ENCODE measurements at regions of chr2 and their contacts with region 1.

Region 1: DNA sequence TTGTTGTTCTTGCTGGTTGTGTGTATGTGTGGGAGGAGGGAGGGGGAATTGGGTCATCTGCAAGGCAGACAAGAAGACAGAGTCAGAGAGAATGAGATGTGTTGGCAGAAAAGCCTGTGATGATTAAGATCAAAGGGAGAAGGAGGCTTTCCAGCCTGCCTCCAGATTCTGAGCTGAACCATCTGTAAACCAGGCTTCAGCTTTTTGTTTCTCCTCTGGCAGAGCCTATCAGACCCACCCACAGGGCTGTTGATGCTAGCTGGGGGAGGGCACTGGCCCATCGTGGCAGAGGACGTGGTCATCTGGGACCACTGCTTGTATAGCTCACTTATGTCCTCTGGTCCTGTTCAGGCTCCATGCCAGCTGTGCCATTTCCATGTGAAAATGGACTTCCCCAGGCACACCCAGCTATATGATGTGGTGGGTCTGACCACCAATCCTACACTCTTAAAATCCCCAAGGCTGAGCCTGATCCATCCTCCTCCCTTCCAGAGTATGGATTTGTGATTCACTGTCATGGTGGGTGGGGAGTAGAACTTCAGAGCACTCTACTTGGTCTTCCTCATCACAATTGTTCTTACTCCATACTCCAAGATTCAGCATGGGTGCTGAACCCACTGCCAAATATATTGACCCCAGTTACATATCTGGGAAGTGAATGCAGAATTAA is 27.8 kb upstream of the COL6A3 start:
- DNase-seq: no peak
- H3K4me3 Mint-ChIP-seq: peak overlapping the region; percentile 9
- H3K27ac Mint-ChIP-seq: peak overlapping the region; percentile 90
- H3K4me1 Mint-ChIP-seq: peaks cover 51% of the 10 kb centered on the region
- H3K27me3 Mint-ChIP-seq: no peaks in the 10 kb centered on the region

Region 2: GRCh38 chr2:237427769-237428506 is 13.8 kb before region 1 on chr2:
- intact Hi-C with region 1: loop called (anchors 1 kb)
- DNase-seq: peak; percentile 31
- H3K4me3 Mint-ChIP-seq: peak overlapping the region; percentile 55
- H3K27ac Mint-ChIP-seq: peak overlapping the region; percentile 84
- H3K4me1 Mint-ChIP-seq: peaks cover 69% of the 10 kb centered on the region
- H3K27me3 Mint-ChIP-seq: peaks cover 3% of the 10 kb centered on the region

Region 3: DNA sequence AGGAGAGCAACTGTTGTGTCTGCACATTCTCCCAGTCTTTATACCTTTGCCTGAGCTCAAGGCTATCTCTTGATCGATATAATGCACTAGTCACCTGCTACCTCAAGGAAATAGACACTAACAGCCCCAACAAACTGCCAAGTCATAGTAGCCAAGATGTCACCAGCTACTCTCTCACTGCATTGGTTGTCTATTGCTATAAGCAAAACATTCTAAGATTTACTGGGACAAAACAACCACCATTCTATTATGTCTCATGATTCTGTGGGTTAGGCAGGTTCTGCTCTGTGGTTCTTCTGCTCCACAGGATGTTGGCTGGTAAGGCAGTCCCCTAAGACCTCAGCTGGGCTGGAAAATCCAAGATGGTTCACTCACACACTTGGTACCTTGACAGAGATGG is 16.8 kb after region 1 on chr2:
- intact Hi-C with region 1: loop called (anchors 1 kb)
- DNase-seq: no peak
- H3K4me3 Mint-ChIP-seq: no peak overlapping the region
- H3K27ac Mint-ChIP-seq: peak overlapping the region; percentile 30
- H3K4me1 Mint-ChIP-seq: peaks cover 28% of the 10 kb centered on the region
- H3K27me3 Mint-ChIP-seq: no peaks in the 10 kb centered on the region

Region 4: DNA sequence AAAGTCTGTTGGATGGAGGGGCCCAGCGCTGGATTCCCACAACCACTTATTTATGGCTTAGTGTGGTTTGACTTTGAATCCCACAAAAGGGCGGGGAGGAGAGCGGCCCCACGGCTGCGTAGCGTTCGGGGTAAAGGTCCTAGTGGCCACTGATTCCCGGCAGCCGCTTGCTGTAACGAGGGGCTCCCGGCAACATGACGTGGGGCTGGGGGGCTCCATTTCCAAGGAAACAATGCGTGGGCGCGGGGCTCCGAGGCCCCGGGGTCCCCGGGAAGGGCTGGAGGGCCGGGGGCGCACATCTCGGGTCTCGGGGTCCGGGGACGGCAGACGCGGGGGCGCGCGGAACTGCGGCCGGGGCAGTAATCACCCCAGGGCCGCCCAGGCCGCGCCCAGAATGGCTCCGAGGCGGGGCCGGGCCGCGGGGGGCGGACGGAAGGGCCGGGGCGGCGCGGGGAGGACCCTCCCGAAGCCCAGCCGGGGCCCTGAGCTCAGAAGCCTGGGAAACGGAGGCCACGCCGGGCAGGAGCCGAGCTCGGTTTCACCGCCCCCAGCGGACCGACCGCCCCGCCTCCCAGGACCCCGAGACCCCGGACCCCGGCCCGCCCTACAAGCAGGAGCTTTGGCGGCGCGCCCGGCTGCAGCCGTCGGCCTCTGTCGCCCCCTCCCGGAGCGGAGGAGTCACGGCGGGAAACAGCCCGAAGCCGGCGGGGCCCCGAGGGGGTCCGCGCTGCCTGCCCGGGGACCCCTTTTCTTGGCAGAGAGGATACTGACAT is 33.4 kb after region 1 on chr2:
- intact Hi-C with region 1: loop called (anchors 2 kb)
- DNase-seq: peak; percentile 68
- H3K4me3 Mint-ChIP-seq: peak overlapping the region; percentile 84
- H3K27ac Mint-ChIP-seq: peak overlapping the region; percentile 87
- H3K4me1 Mint-ChIP-seq: peaks cover 14% of the 10 kb centered on the region
- H3K27me3 Mint-ChIP-seq: peaks cover 29% of the 10 kb centered on the region

Region 5: DNA sequence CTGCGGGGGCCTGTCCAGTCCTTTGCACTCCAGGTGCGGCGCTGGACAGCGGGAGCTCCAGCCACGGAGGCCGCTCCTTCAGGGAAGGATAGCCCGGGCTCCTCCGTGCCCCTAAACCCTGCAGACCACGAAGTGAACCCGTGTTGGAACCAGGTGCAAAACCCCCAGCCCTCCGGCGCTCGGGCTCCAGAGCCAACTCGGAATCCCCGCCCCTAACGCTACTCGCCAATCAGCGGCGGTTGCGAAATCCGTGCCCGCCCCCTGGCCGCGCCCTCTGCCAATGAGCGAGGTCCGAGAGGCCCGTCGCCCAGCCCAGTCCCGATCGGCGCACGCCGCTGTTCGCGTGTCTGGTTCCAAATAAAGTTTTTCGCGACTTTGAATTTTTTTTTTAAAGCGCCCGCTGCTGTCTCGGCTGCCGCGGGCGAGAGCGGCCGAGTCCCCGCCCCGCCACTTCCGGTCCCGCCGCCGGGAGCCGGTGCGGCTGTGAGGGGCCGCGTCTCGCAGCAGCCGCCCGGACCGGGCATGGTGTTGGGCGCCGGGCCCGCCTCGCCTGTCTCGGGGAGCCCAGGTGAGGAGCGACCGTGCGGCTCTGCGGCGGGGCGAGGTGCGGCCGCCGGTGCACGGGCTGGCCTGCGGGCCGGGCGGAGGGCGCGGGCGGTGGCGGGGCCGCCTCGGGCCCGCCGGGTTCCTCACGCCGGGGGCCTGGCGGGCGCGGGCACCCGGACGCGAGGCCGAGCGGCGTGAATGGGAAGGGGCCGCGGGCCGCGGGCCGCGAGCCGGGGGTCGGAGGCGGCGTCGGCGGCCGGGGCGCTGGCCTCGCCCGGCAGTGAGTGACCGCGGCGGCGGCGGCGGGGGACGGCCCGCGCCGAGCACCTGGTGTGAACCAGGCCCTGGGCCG is 525.1 kb after region 1 on chr2 and contains the start of gene UBE2F:
- intact Hi-C with region 1: no loop called
- DNase-seq: peak; percentile 97
- H3K4me3 Mint-ChIP-seq: peak within 1 kb of the TSS; percentile 89
- H3K27ac Mint-ChIP-seq: peak within 1 kb of the TSS; percentile 78
- H3K4me1 Mint-ChIP-seq: peaks cover 34% of the 10 kb centered on the region
- H3K27me3 Mint-ChIP-seq: no peaks in the 10 kb centered on the region
- total RNA-seq, gene UBE2F: 137 and 146 TPM in 2 replicates

Measured in activated T-helper 2 cell treated with anti-CD3 and anti-CD28 coated beads, Interferon-gamma antibody, Interleukin-2, Interleukin-4, amounts not matched to agents 10 μg/mL and 5 μg/mL and 100 μg/mL, durations not matched to agents 14 hours and 24 hours and 36 hours (primary cell).